Esophagus squamous epithelium (tissue), 5 donors: ENCODE measurements at regions of chr16 and their contacts with region 1.

Region 1: DNA sequence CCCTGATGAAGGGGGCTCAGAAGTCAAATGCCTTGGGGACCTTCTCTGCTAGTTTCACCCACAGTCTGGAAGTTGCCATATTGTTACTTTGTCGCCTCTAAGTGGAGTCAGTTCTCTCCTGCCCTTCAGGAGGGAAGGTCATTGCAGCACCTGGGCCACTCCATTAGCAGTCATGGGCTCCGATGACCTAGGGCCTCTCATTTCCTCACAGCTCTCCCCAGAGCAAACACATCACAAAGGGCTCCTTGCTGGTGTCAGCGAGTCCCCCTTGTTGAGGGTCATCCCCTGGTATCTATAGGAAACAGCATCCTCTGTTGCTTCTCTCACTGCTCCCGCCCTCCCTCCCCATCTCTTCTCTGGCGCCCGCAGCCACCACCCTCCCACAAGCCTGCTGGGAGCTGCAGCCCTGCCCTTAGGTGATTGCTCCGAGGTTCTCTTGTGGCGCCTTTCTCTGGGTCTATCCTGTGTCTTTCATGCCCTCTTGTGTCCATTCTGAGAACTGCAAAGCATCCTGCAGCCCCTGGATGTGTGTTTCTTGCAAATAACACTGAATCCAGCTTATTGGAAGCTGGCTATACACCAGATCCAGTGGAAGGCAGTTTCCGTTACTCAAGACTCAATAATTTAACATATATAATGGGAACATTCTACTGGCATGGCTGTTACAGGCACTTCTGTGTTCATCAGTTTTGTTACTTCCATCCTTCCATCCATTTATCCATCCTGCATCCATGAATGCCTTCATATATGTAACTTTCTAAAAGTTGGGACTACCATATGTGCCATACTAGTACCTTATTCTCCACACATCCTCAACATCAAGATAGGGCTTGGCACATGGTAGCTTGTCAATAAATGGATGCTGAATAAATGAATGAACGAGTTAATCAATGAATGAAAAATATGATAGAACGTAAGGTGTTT is 21.2 kb downstream of the PDILT start:
- DNase-seq: no peak
- H3K4me3 ChIP-seq: no peak overlapping the region
- H3K27ac ChIP-seq: no peak overlapping the region
- H3K4me1 ChIP-seq: peaks cover 0 to 10% (median 0%) of the 10 kb centered on the region in 3 donors
- H3K27me3 ChIP-seq: peaks cover 0 to 20% (median 0%) of the 10 kb centered on the region in 4 donors
- CTCF ChIP-seq: peak in 5 of 6 experiments; percentile 55 to 74 (median 68)
- POLR2A ChIP-seq: no peak

Region 2: DNA sequence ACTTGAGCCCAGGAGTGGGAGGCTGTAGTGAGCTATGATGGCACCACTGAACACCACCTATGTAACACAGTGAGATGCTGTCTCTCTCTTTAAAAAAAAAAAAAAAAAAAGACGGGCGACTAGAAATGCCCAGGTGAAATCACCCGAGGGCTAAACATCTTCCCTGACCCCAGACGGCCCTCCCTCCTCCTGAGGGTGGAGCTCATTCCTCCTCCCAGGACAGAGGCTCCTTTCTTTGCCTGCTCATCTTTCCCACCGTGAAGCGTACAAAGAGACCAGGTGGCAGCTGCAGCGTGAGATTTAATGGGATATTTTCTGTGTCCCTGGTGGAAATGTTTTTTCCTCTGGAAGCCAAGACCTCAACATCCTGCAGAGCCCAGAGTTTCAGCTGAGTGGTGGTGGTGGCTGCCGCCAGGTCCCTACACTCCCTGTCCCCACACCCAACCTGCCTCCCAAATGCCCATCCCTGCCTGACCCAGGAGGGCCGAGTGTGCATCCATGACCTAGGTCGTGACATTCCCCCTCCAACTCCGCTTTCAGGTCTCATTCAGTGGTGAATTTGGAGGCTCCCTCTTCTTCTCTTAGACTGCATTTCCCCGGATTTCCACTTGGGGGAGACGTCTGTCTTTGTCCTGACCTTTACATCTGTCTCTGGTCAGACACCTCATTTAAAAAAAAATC is 484.3 kb before region 1 on chr16:
- intact Hi-C with region 1: loop called (anchors 5 kb)
- DNase-seq: no peak
- H3K4me3 ChIP-seq: no peak overlapping the region
- H3K27ac ChIP-seq: no peak overlapping the region
- H3K4me1 ChIP-seq: no peaks in the 10 kb centered on the region
- H3K27me3 ChIP-seq: peaks cover 0 to 15% (median 0%) of the 10 kb centered on the region in 4 donors
- CTCF ChIP-seq: peak; percentile 31 to 71 (median 60)
- POLR2A ChIP-seq: no peak

Region 3: DNA sequence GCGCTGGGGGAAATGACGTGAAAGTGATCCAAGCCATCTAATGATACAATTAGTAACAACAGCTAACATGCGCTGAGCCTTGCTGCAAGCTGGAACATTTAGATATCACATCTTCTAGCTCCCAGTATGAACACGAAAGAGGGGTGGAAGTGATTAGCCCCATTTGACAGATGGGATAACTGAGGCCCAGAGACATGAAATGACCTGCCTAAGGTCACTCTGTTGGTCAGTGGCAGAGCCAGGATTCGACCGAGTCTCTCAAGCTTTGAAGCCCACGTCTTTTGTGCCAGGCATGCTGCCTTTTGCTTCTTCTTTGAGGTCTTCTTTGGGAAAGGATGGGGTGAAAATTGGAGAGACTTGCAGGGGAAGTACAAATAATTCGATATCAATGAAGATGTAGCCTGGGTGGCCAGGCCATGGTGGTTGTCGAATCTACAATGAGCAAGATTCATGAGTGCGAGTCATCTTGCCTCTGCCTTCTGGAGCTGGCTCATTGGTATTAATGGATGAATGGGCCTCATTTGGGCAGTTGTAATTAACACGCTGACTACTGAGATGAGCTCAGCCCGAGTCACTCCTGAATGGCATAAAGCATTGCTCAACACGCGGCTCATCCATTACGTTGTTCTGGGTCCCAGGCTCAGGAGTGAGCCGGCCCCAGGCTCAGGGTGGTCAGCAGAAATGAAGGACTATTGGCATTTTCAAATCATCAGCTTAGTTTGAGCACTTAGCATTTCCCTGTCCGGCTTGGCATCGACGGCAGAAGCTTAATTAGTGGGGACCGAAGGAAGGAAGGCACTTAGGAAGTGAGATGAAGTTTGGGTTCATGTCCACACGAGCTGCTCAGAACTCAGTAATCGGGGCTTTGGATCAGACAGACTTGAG is 470.7 kb before region 1 on chr16:
- intact Hi-C with region 1: loop called (anchors 5 kb)
- DNase-seq: no peak
- H3K4me3 ChIP-seq: no peak overlapping the region
- H3K27ac ChIP-seq: no peak overlapping the region
- H3K4me1 ChIP-seq: peaks cover 0 to 2% (median under 1%) of the 10 kb centered on the region in 3 donors
- H3K27me3 ChIP-seq: peaks cover 0 to 26% (median 0%) of the 10 kb centered on the region in 4 donors
- CTCF ChIP-seq: no peak
- POLR2A ChIP-seq: no peak

Region 4: DNA sequence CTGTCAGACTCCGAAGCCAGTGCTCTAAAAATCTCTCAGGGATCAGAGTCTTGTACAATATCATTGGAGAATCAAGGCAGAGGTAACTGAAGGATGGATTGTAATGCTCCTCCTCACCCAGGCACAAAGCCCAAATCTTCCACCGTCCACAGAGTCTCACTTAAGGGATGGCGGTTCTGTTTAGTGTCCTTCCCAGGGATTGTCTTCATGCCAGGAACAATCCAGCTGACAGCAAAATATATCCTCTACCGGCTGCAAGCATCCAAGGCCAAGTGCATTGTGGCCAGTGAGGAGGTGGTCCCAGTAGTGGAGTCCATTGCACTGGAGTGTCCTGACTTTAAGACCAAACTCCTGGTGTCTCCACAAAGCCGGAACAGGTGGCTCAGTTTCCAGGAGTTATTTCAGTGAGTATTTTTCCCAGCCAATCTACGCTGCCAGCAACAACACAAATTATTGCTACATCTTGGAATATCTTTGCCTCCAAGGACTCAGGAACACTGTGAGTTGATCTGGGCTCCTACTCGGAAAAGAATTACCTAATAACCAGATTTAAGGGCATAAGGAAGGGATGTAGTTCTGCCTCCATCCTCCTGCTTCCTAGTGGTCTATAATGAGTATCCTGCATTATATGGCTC is 328.0 kb after region 1 on chr16:
- intact Hi-C with region 1: loop called (anchors 10 kb)
- DNase-seq: no peak
- H3K4me3 ChIP-seq: no peak overlapping the region
- H3K27ac ChIP-seq: no peak overlapping the region
- H3K4me1 ChIP-seq: peaks cover 0 to 8% (median 0%) of the 10 kb centered on the region in 3 donors
- H3K27me3 ChIP-seq: no peaks in the 10 kb centered on the region
- CTCF ChIP-seq: no peak
- POLR2A ChIP-seq: no peak